Transverse colon (tissue), 4 donors: ENCODE measurements at regions of chr17 and their contacts with region 1.

Region 1: GRCh38 chr17:47840740-47841603 is at the start of gene SCRN2:
- DNase-seq: peak; percentile 95
- H3K4me3 ChIP-seq: peak within 1 kb of the TSS; percentile 48 to 94 (median 68)
- H3K27ac ChIP-seq: peak within 1 kb of the TSS; percentile 65 to 84 (median 77)
- H3K4me1 ChIP-seq: peaks cover 12 to 37% (median 32%) of the 10 kb centered on the region in 4 donors
- H3K27me3 ChIP-seq: peaks cover 6% of the 10 kb centered on the region
- CTCF ChIP-seq: peak; percentile 94 to 99 (median 97)
- EP300 ChIP-seq: no peak
- POLR2A ChIP-seq: peak; percentile 36
- total RNA-seq, gene SCRN2: 37.8 to 164 (median 89.7) TPM

Region 2: GRCh38 chr17:47889734-47890529 is 49.0 kb after region 1 on chr17:
- in situ Hi-C with region 1: loop called in 3 of 4 experiments (anchors 5 kb)
- intact Hi-C with region 1: loop called (anchors 2 kb)
- DNase-seq: peak; percentile 93
- H3K4me3 ChIP-seq: no peak overlapping the region
- H3K27ac ChIP-seq: no peak overlapping the region
- H3K4me1 ChIP-seq: peaks cover 7 to 30% (median 18%) of the 10 kb centered on the region in 4 donors
- H3K27me3 ChIP-seq: no peaks in the 10 kb centered on the region
- CTCF ChIP-seq: peak; percentile 97 to 98 (median 97)
- EP300 ChIP-seq: no peak
- POLR2A ChIP-seq: no peak

Region 3: GRCh38 chr17:47941236-47941994 is 100.4 kb after region 1 on chr17 and contains the start of gene PNPO:
- in situ Hi-C with region 1: no loop called
- intact Hi-C with region 1: loop called (anchors 10 kb)
- DNase-seq: peak; percentile 96
- H3K4me3 ChIP-seq: peak within 1 kb of the TSS; percentile 59 to 67 (median 65)
- H3K27ac ChIP-seq: peak within 1 kb of the TSS; percentile 80 to 88 (median 82)
- H3K4me1 ChIP-seq: peaks cover 4 to 51% (median 24%) of the 10 kb centered on the region in 4 donors
- H3K27me3 ChIP-seq: no peaks in the 10 kb centered on the region
- CTCF ChIP-seq: peak in 3 of 5 experiments; percentile 12 to 54 (median 42)
- EP300 ChIP-seq: no peak
- POLR2A ChIP-seq: peak; percentile 74
- total RNA-seq, gene PNPO: 7.4 to 83.8 (median 31.6) TPM

Region 4: DNA sequence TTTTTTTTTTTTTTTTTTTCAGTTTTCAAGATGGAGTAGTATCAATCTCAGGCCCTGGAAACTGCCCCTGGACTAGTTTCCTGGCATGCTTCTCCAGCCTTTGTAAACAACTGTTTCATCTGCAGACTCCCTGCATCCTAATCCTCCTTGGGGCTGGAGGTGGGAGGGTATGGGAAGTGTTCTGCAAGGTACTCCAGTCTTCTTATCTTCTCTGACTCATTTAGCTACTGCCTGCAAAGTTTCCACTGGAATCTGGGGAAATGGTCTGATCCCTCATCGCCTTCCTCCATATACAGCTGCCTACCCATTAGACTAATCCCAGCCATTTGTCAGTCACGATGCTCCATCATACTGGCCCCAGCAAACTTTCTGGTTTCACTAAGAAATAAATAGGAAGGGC is 175.1 kb after region 1 on chr17:
- in situ Hi-C with region 1: no loop called
- intact Hi-C with region 1: no loop called
- DNase-seq: no peak
- H3K4me3 ChIP-seq: no peak overlapping the region
- H3K27ac ChIP-seq: no peak overlapping the region
- H3K4me1 ChIP-seq: peaks cover 7 to 16% (median 13%) of the 10 kb centered on the region in 4 donors
- H3K27me3 ChIP-seq: peaks cover 61% of the 10 kb centered on the region
- CTCF ChIP-seq: no peak
- EP300 ChIP-seq: no peak
- POLR2A ChIP-seq: no peak